AG04449 (cell line): ENCODE measurements at regions of chr6 and their contacts with region 1.

Region 1: GRCh38 chr6:111259089-111259831 is 172.0 kb downstream of the SLC16A10 start:
- DNase-seq: peak; percentile 94
- H3K4me3 ChIP-seq: peak overlapping the region; percentile 85
- CTCF ChIP-seq: peak; percentile 87

Region 2: DNA sequence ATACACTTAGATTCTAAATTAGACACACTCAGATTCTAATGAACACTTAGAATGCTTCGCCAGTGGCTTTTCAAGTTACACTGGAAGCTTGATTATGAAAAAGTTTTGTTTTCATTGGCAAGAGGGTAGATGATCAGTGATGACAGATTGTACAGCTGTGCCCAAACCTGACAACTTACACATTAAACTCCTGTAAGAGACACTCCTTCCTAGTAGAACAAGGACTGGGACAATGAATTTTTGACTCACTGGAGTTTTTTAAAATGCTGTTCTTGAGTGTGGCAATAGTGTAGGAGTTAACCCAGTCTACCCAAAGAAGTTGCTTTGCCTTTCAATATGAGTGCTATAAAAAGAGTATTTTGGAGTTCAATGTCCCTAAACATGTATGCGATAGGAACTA is 31.2 kb before region 1 on chr6:
- CTCF ChIA-PET with region 1: interaction called, 10 read pairs
- POLR2A ChIA-PET with region 1: interaction called, 3 read pairs
- DNase-seq: no peak
- H3K4me3 ChIP-seq: no peak overlapping the region
- CTCF ChIP-seq: no peak

Region 3: GRCh38 chr6:111242452-111242851 is 16.8 kb before region 1 on chr6:
- CTCF ChIA-PET with region 1: interaction called, 20 read pairs
- POLR2A ChIA-PET with region 1: interaction called, 7 read pairs
- DNase-seq: no peak
- H3K4me3 ChIP-seq: no peak overlapping the region
- CTCF ChIP-seq: no peak

Region 4: DNA sequence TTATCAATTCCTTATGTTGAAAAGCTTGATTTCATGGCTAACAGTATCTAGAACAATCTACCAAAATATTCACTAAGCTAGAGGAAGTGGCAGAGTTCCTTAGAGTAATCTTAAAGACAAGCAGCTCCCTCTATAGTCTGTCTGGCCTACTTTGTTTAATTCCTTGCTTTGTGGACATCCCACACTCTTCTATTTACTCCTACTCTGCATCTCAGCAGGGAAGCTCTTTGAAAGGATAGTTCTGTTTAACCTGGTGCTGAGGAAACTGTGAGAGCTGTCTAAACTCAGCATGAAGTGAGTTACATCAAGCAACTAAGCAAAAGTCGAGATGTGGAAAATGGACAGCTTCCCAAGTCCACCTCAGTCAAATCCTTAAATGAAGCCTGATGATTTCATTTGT is 219.5 kb after region 1 on chr6:
- CTCF ChIA-PET with region 1: interaction called, 15 read pairs
- POLR2A ChIA-PET with region 1: interaction called, 3 read pairs
- DNase-seq: no peak
- H3K4me3 ChIP-seq: no peak overlapping the region
- CTCF ChIP-seq: peak; percentile 41